Heart right ventricle (tissue), 16 donors: ENCODE measurements at regions of chr5 and their contacts with region 1.

Region 1: GRCh38 chr5:90529194-90529938 is at the start of gene LYSMD3:
- DNase-seq: peak; percentile 98 to 99
- ATAC-seq: peak; percentile 99 to 100 (median 100)
- H3K4me3 ChIP-seq: peak within 1 kb of the TSS; percentile 81 to 96 (median 90)
- H3K27ac ChIP-seq: peak within 1 kb of the TSS; percentile 87 to 98 (median 96)
- H3K4me1 ChIP-seq: peaks cover 0 to 43% (median 32%) of the 10 kb centered on the region in 9 donors
- H3K27me3 ChIP-seq: peaks cover 0 to 18% (median 7%) of the 10 kb centered on the region in 7 donors
- CTCF ChIP-seq: no peak
- total RNA-seq, gene LYSMD3: 15.2 to 26.7 (median 19.6) TPM

Region 2: DNA sequence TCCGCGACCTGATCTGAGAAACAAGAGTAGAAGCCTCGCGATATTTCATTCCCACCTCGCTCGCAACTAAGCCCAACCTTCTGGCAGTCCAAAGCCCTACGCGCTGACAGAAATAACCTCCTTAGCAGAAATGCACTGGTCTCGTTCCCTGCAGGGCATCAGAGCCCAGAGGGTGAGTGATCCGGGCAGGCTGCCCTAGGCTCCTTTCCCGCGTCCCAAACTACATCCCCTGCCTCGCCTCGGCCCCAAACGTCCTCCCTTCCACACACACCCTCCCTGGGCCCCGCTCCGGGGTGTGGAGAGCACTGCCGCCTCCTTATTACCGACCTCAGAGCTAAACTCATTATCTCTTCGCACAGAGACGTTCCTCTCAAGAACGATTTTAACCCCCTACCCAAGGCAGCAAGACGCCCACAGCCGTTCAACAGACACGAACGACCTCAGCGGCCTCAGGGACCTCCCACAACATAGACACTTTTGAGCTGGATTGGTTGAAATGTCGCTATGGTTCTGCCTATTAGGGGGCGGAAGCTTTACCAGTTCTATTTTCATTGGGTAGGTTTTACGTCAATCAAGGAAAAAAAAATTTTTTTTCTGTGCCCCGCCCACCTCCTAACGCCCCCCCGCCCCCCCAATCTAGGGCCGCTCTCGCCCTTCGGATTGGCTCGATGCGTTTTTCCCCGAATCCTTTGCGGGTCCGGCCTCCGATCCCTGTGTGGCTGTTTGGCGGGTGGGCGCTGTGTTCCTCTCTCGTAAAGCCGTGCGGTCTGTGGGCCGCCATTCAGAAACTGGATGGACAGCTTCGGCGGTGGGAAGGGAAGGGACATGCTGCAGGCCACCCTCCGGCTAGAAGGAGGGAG is 119.8 kb before region 1 on chr5 and contains the start of gene CETN3:
- intact Hi-C with region 1: loop called in 1 of 10 experiments (anchors 2 kb)
- DNase-seq: peak; percentile 90 to 94
- ATAC-seq: peak; percentile 98 to 99 (median 98)
- H3K4me3 ChIP-seq: peak within 1 kb of the TSS; percentile 63 to 97 (median 82)
- H3K27ac ChIP-seq: peak within 1 kb of the TSS; percentile 88 to 98 (median 96)
- H3K4me1 ChIP-seq: peaks cover 0 to 35% (median 11%) of the 10 kb centered on the region in 9 donors
- H3K27me3 ChIP-seq: no peaks in the 10 kb centered on the region
- CTCF ChIP-seq: peak in 2 of 9 donors; percentile 7 to 25
- total RNA-seq, gene CETN3: 17.2 to 26.6 (median 21.3) TPM

Region 3: DNA sequence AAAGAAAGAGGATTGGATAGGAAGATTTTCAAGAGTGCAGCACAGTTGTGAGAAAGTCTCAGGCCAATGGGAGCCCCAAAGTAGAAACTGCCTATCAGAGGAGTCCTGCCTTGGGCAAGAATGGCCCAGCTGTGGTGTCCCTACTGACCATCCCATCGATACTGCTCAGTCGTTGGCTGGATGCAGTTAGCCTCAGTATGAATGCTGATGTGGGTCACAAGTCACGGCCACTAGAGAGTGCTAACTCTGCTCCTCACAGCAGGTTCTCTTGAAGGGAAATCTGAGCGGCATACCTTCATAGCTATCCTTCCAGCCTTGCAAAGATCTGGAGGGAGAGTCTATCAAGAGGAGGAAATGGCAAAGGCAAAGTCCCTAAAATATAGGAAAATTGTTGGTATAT is 108.2 kb before region 1 on chr5:
- intact Hi-C with region 1: loop called in 1 of 10 experiments (anchors 10 kb)
- DNase-seq: no peak
- ATAC-seq: peak in 3 of 8 donors; percentile 20 to 68 (median 42)
- H3K4me3 ChIP-seq: no peak overlapping the region
- H3K27ac ChIP-seq: no peak overlapping the region
- H3K4me1 ChIP-seq: no peaks in the 10 kb centered on the region
- H3K27me3 ChIP-seq: peaks cover 0 to 4% (median 0%) of the 10 kb centered on the region in 7 donors
- CTCF ChIP-seq: peak in 3 of 9 donors; percentile 7 to 25 (median 19)

Region 4: DNA sequence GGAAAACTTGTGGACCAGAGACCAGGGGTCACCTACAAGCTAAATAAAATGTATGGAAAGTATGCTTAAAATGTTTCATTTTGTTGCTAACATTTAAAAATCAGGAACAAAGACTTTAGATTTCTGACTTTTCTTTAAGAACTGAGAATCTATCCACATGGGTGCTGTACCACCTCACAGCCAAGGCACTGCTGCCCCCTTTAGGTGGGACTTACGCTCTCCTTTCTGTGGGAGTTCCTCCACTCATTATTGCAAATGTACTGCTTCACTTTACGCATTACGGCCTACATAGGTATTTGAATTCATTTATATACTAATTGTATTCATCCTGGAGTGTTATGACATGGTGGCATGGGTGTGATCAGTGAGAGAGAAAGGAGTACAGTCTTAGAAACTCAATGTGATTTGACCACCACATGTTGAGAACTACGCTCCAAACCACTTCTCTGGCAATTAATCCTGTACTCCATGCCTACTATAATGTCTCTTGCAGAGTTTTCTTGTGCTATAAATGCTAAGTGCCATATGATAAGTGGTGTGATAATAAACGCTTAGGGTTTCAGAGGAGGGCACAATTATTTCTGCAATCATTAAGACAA is 95.2 kb before region 1 on chr5:
- intact Hi-C with region 1: loop called in 7 of 10 experiments (anchors 1 to 10 kb)
- DNase-seq: no peak
- ATAC-seq: peak in 2 of 8 donors; percentile 45 to 48
- H3K4me3 ChIP-seq: no peak overlapping the region
- H3K27ac ChIP-seq: no peak overlapping the region
- H3K4me1 ChIP-seq: peaks cover 0 to 9% (median 4%) of the 10 kb centered on the region in 9 donors
- H3K27me3 ChIP-seq: no peaks in the 10 kb centered on the region
- CTCF ChIP-seq: peak; percentile 23 to 68 (median 59)

Region 5: GRCh38 chr5:90440644-90441043 is 88.7 kb before region 1 on chr5:
- intact Hi-C with region 1: loop called in 7 of 10 experiments (anchors 1 to 5 kb)
- DNase-seq: no peak
- ATAC-seq: no peak
- H3K4me3 ChIP-seq: peak overlapping the region in 1 of 10 donors; percentile 63
- H3K27ac ChIP-seq: no peak overlapping the region
- H3K4me1 ChIP-seq: peaks cover 0 to 14% (median 7%) of the 10 kb centered on the region in 9 donors
- H3K27me3 ChIP-seq: no peaks in the 10 kb centered on the region
- CTCF ChIP-seq: no peak

Region 6: DNA sequence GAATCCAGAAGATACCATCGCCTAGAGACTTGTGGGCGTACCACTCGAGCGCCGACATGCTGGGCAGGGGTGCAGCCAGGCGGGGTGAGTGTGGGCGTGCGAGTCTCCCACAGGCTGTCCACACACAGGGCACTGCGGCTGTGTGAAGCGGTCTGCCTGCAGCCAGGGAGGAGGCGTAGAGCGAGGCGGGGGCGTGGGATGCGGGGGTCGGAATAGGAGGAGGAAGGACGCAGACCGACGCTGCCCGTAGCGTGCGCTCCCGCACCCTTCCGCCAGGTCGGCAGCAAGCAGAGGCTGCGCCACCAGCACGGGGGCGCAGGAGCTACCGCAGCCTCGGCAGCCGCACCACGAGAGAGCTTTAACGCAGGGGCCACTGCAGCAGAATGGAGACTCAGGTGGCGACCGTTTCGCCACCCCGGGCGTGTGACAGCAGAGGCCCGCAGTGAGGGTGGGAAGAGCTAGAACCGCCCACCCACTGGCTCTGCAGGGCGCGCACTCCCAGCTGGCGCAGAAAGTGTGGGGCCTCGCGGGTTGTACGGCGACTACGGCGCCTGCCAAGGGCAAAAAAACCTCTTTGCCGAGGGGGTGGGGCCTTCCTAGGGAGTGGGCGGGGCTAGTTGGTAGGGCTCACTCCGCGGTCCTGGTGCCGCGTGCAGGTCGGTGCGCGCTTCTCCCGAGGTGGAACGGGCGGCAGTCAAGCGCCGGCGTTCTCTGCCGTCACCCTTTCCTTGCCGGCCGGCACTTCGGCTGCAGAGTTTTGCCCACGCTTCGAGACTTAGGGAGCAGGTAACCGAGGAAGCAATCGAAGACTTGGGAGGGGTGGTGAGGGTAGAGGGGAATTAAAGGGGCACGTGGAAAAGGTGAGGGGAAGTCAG is 54.9 kb before region 1 on chr5 and contains the starts of genes MBLAC2 and POLR3G:
- intact Hi-C with region 1: loop called in 7 of 10 experiments (anchors 2 to 10 kb)
- DNase-seq: peak; percentile 91 to 93
- ATAC-seq: peak; percentile 97 to 99 (median 98)
- H3K4me3 ChIP-seq: peak within 1 kb of the TSS; percentile 65 to 95 (median 82)
- H3K27ac ChIP-seq: peak within 1 kb of the TSS; percentile 8 to 91 (median 82)
- H3K4me1 ChIP-seq: peaks cover 0 to 30% (median 19%) of the 10 kb centered on the region in 9 donors
- H3K27me3 ChIP-seq: no peaks in the 10 kb centered on the region
- CTCF ChIP-seq: peak in 7 of 9 donors; percentile 14 to 60 (median 50)
- total RNA-seq, gene MBLAC2: 3.1 to 4.8 (median 3.5) TPM
- total RNA-seq, gene POLR3G: 0.13 to 2.1 (median 0.54) TPM

Region 7: DNA sequence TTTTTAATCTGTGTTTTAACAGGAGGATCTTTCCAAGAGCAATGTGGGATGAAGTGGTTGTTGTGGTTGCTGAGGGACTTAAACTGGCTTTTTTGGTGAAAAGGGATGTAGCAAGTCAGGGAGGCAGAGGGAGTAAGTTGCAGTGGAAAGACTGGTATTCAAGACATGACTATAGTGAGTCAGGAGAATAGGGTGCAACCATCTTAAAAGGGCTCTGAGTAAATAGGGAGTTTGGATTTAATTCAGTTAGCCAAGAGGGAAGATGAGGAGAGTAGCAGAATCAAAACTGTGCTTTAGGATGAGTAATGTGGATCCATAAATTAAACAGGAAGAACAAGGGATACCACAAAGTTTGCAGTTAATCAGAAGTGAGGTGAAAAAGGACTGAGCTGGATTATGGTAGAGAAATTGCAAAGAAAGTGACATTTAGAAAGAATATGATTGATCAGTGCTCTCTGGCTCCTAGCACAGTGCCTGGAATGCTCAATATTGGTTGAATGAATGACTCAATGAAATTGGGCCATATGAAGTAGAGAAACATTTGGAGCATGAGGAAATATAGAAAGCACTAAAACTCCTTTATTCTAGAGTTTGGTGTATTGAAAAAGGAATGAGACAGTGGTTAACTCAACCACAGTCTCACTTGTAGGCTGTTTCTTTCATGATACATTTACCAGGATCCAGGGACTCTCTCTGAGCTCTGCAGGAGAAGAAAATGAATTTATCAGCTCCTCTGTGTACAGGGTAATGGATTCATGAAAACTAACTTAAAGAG is 49.6 kb before region 1 on chr5:
- intact Hi-C with region 1: loop called in 8 of 10 experiments (anchors 2 to 10 kb)
- DNase-seq: no peak
- ATAC-seq: no peak
- H3K4me3 ChIP-seq: no peak overlapping the region
- H3K27ac ChIP-seq: no peak overlapping the region
- H3K4me1 ChIP-seq: peaks cover 0 to 9% (median 4%) of the 10 kb centered on the region in 9 donors
- H3K27me3 ChIP-seq: no peaks in the 10 kb centered on the region
- CTCF ChIP-seq: no peak